ENCODE measurements at regions of chr9 and their contacts with region 1.

Region 1: GRCh38 chr9:126301985-126302603 is 24.5 kb upstream of the MVB12B start:
- DNase-seq: peak; percentile 4
- H3K4me3 ChIP-seq: no peak overlapping the region
- CTCF ChIP-seq: peak; percentile 87

Region 2: DNA sequence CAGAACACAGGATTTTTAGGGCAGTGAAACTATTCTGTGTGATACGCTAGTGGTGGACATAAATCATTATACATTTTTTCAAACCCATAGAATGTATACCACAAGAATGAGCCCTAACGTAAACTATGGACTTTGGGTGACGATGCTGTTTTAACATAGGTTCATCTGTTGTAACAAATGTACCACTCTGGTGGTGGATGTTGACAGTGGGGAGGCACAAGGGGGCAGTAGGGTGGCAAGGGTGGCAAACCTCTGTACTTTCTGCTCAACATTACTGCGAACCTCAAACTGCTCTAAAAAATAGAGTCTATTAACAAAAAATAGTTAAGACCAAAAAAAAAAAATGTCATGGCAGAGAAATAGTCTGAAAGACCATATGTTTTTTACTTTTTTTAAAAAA is 15.4 kb after region 1 on chr9:
- CTCF ChIA-PET with region 1: interaction called, 13 read pairs
- POLR2A ChIA-PET with region 1: no interaction called
- DNase-seq: no peak
- H3K4me3 ChIP-seq: no peak overlapping the region
- CTCF ChIP-seq: peak; percentile 48

Region 3: GRCh38 chr9:126386088-126386487 is 84.0 kb after region 1 on chr9:
- CTCF ChIA-PET with region 1: interaction called, 11 read pairs
- POLR2A ChIA-PET with region 1: no interaction called
- DNase-seq: no peak
- H3K4me3 ChIP-seq: no peak overlapping the region
- CTCF ChIP-seq: peak; percentile 44

Region 4: DNA sequence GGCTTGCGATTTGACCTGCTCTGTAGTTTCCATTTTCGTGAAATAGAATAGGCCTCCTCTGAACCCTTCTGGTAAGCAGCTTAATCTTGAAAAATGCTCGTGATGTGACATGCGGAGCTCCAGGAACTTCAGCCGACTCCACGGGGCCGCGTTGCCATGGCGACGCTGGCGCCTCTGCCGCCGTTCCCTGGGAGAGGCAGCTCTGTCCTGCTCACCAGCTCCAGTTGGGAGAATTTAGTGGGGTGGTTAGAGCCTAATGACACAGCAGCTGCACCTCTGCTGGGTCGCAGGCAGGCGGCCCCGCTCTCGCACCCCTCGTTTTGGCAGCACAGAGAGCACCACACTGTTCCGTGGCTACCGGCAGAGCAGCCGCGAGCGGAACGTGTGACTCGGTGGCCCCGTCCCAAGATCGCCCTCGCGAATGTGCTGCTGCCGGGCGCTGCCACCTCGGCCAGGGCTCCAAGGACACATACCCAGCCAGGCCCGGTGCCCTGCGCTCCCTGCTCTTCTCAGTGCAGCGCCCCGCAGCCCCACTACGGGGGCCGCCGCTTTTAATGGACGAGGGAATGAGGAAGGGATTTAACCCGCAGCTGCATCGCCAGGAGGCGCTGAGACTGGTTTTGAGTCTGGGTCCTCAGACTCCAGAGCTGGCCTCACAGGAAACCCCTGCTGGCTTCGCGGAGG is 180.4 kb after region 1 on chr9:
- CTCF ChIA-PET with region 1: interaction called, 18 read pairs
- POLR2A ChIA-PET with region 1: no interaction called
- DNase-seq: no peak
- H3K4me3 ChIP-seq: no peak overlapping the region; the same call in 1 of the 2 replicates
- CTCF ChIP-seq: no peak

Region 5: GRCh38 chr9:126626127-126626925 is 324.2 kb after region 1 on chr9:
- CTCF ChIA-PET with region 1: no interaction called
- POLR2A ChIA-PET with region 1: no interaction called
- DNase-seq: no peak
- H3K4me3 ChIP-seq: no peak overlapping the region
- CTCF ChIP-seq: no peak

Measured in AG04449 (cell line).